ENCODE measurements at regions of chr6 and their contacts with region 1.

Region 1: DNA sequence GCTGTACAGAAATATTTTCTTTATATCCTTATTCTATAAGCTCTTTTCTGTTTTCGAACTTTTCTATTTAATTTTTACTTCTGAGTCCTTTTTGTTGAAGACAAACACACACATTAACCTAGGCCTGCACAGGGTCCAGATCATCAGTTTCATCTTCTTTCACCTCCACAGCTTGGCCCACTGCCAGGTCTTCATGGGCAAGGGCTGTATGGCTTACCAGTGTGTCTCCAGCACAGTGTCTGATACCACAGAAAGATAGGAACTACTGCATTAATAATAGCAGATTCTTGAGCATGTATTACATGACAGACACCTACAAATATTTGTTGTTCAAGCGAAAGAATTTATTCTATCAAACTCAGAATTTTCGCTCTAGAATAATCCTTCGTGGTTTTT is 24.4 kb downstream of the QKI start:
- DNase-seq: no peak
- H3K4me3 Mint-ChIP-seq: no peak overlapping the region
- H3K27ac Mint-ChIP-seq: no peak overlapping the region
- H3K4me1 Mint-ChIP-seq: peaks cover 54% of the 10 kb centered on the region
- H3K27me3 Mint-ChIP-seq: no peaks in the 10 kb centered on the region

Region 2: GRCh38 chr6:163412801-163413344 is 26.1 kb before region 1 on chr6:
- CTCF ChIA-PET with region 1: no interaction called
- intact Hi-C with region 1: no loop called
- DNase-seq: no peak
- H3K4me3 Mint-ChIP-seq: peak overlapping the region; percentile 84
- H3K27ac Mint-ChIP-seq: peak overlapping the region; percentile 74
- H3K4me1 Mint-ChIP-seq: peaks cover 15% of the 10 kb centered on the region
- H3K27me3 Mint-ChIP-seq: no peaks in the 10 kb centered on the region

Region 3: GRCh38 chr6:163460307-163460782 is 21.4 kb after region 1 on chr6:
- CTCF ChIA-PET with region 1: no interaction called
- intact Hi-C with region 1: loop called (anchors 2 kb)
- DNase-seq: peak; percentile 25
- H3K4me3 Mint-ChIP-seq: peak overlapping the region; percentile 90
- H3K27ac Mint-ChIP-seq: peak overlapping the region; percentile 97
- H3K4me1 Mint-ChIP-seq: peaks cover 61% of the 10 kb centered on the region
- H3K27me3 Mint-ChIP-seq: no peaks in the 10 kb centered on the region

Measured in activated naive CD4-positive, alpha-beta T cell treated with anti-CD3 and anti-CD28 coated beads for 36 hours (primary cell).